ENCODE measurements at regions of chr20 and their contacts with region 1.

Region 1: DNA sequence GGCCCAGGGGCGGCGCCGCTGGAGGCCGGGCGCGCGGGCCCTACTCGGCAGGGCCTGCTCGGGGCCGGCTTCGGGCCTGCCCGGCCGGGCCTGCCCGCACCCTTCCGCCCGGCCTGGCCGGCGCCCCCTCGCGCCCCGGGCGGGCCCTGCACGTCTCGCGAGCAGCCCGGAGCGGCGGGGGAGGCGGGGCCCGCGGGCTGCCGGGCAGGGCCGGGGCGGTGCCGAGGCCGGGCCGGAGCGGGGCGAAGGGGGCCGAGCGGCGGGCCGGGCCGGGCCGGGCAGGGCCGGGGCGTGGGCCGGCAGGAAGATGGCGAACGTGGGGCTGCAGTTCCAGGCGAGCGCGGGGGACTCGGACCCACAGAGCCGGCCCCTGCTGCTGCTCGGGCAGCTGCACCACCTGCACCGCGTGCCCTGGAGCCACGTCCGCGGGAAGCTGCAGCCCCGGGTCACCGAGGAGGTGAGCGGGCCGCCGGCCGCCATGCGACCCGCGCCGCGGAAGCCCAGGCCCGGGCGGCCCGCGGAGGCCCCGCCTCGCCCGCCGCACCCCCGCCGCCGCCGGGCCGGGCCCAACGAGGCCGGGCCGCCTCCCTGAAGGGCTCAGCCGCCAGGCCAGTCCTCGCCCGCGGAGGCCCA is at the start of gene NPEPL1:
- DNase-seq: peak; percentile 77 to 88 (median 79)
- ATAC-seq: peak; percentile 33 to 92 (median 83)
- H3K4me3 ChIP-seq: peak within 1 kb of the TSS in 11 of 12 donors; percentile 34 to 74 (median 59)
- H3K27ac ChIP-seq: peak within 1 kb of the TSS; percentile 84 to 98 (median 92)
- H3K4me1 ChIP-seq: peaks cover 7 to 43% (median 22%) of the 10 kb centered on the region in 12 donors
- H3K27me3 ChIP-seq: no peaks in the 10 kb centered on the region
- CTCF ChIP-seq: peak in 3 of 12 donors; percentile 16 to 32 (median 17)
- POLR2A ChIP-seq: peak in 1 of 2 donors; percentile 31
- total RNA-seq, gene NPEPL1: 18.5 to 33.4 (median 30.1) TPM

Region 2: GRCh38 chr20:58388882-58389323 is 303.8 kb before region 1 on chr20 and contains the start of gene VAPB:
- intact Hi-C with region 1: loop called in 1 of 10 experiments (anchors 5 kb)
- DNase-seq: peak; percentile 94 to 99 (median 96)
- ATAC-seq: peak; percentile 99 to 100 (median 99)
- H3K4me3 ChIP-seq: peak within 1 kb of the TSS; percentile 69 to 91 (median 86)
- H3K27ac ChIP-seq: peak within 1 kb of the TSS; percentile 80 to 97 (median 94)
- H3K4me1 ChIP-seq: peaks cover 0 to 46% (median 29%) of the 10 kb centered on the region in 12 donors
- H3K27me3 ChIP-seq: no peaks in the 10 kb centered on the region
- CTCF ChIP-seq: no peak
- POLR2A ChIP-seq: peak in 1 of 2 donors; percentile 85
- total RNA-seq, gene VAPB: 30.7 to 76.1 (median 63.8) TPM

Region 3: GRCh38 chr20:58839474-58839874 is 146.8 kb after region 1 on chr20:
- intact Hi-C with region 1: loop called in 1 of 10 experiments (anchors 10 kb)
- DNase-seq: no peak
- ATAC-seq: peak in 3 of 4 donors; percentile 59 to 79 (median 66)
- H3K4me3 ChIP-seq: peak overlapping the region in 7 of 12 donors; percentile 6 to 40 (median 17)
- H3K27ac ChIP-seq: no peak overlapping the region
- H3K4me1 ChIP-seq: peaks cover 0 to 16% (median 0%) of the 10 kb centered on the region in 12 donors
- H3K27me3 ChIP-seq: peaks cover 3 to 69% (median 28%) of the 10 kb centered on the region in 9 donors
- CTCF ChIP-seq: peak; percentile 13 to 58 (median 37)
- POLR2A ChIP-seq: no peak

Region 4: GRCh38 chr20:59994697-59995122 is 1302.0 kb after region 1 on chr20:
- intact Hi-C with region 1: no loop called
- DNase-seq: peak in 4 of 5 donors; percentile 27 to 66 (median 43)
- ATAC-seq: peak; percentile 22 to 84 (median 72)
- H3K4me3 ChIP-seq: peak overlapping the region in 2 of 12 donors; percentile 28 to 34
- H3K27ac ChIP-seq: no peak overlapping the region
- H3K4me1 ChIP-seq: peaks cover 0 to 20% (median 7%) of the 10 kb centered on the region in 12 donors
- H3K27me3 ChIP-seq: no peaks in the 10 kb centered on the region
- CTCF ChIP-seq: no peak
- POLR2A ChIP-seq: no peak

Measured in heart left ventricle (tissue), 16 donors.